ENCODE measurements at regions of chr19 and their contacts with region 1.

Region 1: DNA sequence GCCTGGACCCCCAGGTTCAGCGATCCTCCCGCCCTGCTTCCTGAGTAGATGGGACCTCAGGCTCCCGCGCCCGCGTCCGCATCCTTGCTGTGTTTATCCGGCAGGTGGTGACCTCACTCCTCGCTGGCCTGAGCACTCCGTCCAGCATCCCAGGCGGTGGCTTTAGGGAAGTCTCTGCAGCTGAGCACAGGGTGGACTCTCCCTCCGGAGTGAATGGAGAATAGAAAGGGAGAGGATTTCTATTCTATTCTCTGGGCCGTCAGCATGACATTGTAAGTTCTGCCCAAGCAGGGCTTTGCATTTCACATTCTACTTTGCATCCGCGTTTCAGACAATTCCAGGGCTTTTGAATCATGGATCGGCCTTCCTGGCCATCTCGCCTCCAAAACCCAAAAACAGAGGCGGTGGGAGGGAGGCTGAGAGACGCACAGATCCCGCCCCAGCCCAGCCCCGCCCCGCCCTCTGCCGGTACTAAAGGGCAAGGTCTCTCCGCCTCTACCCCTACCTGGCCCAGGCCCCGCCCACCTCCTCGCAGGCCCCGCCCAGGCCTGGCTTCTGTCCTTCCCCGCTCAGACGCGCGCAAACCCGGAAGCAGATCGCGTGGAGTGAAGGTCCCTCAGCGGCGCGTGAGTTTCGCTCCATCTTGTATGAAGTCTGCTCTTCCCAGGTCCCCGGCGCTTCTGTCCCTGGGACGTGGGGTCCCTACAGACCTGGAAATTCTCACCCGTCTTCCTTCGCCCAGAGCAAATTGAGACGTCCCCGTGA is at the start of gene ZNF525:
- DNase-seq: peak; percentile 97
- H3K4me3 ChIP-seq: peak within 1 kb of the TSS; percentile 59 to 80 (median 76)
- H3K27ac ChIP-seq: peak within 1 kb of the TSS; percentile 77 to 84 (median 81)
- H3K4me1 ChIP-seq: peaks cover 7 to 20% (median 14%) of the 10 kb centered on the region in 4 donors
- H3K27me3 ChIP-seq: no peaks in the 10 kb centered on the region
- CTCF ChIP-seq: peak in 2 of 3 experiments; percentile 18 to 30
- EP300 ChIP-seq: no peak
- POLR2A ChIP-seq: no peak
- total RNA-seq, gene ZNF525: 9.6 to 14.5 (median 12.3) TPM

Region 2: DNA sequence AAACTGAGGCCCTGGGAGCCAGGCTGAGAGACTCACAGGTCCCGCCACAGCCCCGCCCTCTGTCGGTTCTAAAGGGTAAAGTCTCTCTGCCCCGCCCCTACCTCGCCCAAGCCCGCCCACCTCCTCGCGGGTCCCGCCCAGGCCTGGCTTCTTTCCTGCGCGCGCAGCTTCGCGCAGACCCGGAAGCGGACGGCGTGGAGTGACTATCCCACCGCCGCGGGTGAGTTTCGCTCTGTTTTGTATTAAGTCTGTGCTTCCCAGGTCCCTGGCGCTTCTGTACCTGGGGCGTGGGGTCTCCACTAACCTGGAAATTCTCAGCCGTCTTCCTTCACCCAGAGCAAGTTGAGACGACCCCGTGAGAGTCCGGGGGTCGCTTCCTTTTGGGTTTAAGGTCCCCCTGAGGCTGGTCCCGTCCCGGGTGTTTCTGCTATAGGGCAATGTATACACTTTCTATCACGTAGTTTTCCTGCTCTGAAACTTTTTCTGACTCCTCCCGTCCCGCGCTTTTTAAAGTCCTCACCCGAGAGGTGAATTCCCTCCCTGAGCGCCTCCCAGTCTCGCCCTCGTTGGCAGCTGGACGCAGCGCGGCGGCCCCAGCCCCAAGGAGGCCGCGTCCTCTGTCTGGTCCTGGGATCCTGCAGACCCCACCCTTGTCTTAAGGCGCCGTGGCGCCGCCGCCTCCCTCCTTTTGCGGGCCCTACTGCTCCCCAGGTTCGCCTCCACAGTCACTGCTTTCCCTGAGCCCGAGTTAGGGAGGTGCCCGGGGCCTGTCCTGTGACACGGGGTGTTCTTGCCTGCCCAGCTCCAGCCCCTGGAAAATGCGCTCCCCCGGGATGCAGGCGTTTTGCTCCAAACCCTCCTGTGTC is 29.9 kb after region 1 on chr19 and contains the start of gene ZNF765:
- intact Hi-C with region 1: loop called (anchors 2 kb)
- DNase-seq: peak; percentile 99
- H3K4me3 ChIP-seq: peak within 1 kb of the TSS; percentile 65 to 85 (median 74)
- H3K27ac ChIP-seq: peak within 1 kb of the TSS; percentile 79 to 89 (median 84)
- H3K4me1 ChIP-seq: peaks cover 8 to 28% (median 25%) of the 10 kb centered on the region in 4 donors
- H3K27me3 ChIP-seq: no peaks in the 10 kb centered on the region
- CTCF ChIP-seq: peak; percentile 47 to 62 (median 49)
- EP300 ChIP-seq: no peak
- POLR2A ChIP-seq: peak; percentile 48
- total RNA-seq, gene ZNF765: 7.1 to 12.5 (median 8.5) TPM